ENCODE measurements at regions of chr9 and their contacts with region 1.

Region 1: DNA sequence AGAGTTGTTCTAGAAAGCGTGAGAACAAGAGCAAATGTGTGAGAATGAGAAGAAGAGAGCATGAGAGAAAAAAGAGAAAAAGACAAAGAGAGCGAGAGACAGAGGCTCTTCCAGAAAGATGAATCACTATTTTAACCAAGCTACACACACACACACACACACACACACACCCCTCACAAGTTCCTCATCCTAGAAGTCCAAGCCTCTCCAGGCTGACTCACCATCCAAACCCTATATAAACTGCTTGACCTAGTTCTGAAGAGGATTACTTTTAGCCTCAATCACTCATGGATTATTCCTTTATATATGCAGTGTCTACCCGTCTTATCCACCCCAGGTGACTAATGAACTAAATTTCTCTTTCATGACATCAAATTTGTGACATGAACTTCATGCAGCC is 37.6 kb downstream of the C9orf57 start:
- DNase-seq: no peak
- ATAC-seq: no peak
- H3K4me3 ChIP-seq: no peak overlapping the region
- H3K27ac ChIP-seq: no peak overlapping the region
- H3K4me1 ChIP-seq: no peaks in the 10 kb centered on the region
- H3K27me3 ChIP-seq: no peaks in the 10 kb centered on the region
- CTCF ChIP-seq: no peak
- EP300 ChIP-seq: no peak
- POLR2A ChIP-seq: no peak
- RAD21 ChIP-seq: no peak

Region 2: GRCh38 chr9:71604197-71605063 is 418.4 kb before region 1 on chr9:
- CTCF ChIA-PET with region 1: interaction called, 16 read pairs
- POLR2A ChIA-PET with region 1: no interaction called
- RAD21 ChIA-PET with region 1: interaction called, 4 read pairs
- SMC1A ChIA-PET with region 1: interaction called, 4 read pairs
- in situ Hi-C with region 1: no loop called
- intact Hi-C with region 1: loop called (anchors 2 kb)
- DNase-seq: no peak
- ATAC-seq: peak; percentile 93
- H3K4me3 ChIP-seq: no peak overlapping the region
- H3K27ac ChIP-seq: no peak overlapping the region
- H3K4me1 ChIP-seq: no peaks in the 10 kb centered on the region
- H3K27me3 ChIP-seq: no peaks in the 10 kb centered on the region
- CTCF ChIP-seq: peak; percentile 60 to 74 (median 62)
- EP300 ChIP-seq: no peak
- POLR2A ChIP-seq: no peak
- RAD21 ChIP-seq: peak; percentile 75

Region 3: DNA sequence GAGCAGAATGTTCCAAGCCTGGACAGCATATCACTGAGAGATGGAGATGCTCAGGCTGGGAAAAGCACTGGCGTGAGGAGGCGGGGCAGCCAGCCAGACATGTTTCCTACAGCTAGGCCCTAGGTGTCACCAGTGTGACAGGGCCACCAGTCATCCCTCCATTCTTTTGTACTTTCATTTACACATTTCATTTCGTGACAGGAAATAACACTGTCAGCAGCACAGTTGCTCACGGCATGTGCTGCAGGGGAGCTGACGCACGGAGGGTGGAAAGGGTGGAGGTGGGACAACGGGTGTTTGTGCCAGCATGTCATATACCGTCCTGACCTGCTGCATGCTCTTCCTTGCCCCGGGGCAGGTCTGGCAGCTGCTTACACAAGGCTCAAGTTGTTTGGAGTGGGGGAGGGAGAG is 239.7 kb before region 1 on chr9:
- CTCF ChIA-PET with region 1: interaction called, 11 read pairs
- POLR2A ChIA-PET with region 1: no interaction called
- RAD21 ChIA-PET with region 1: interaction called, 13 read pairs
- SMC1A ChIA-PET with region 1: interaction called, 5 read pairs
- in situ Hi-C with region 1: no loop called
- intact Hi-C with region 1: no loop called
- DNase-seq: no peak
- ATAC-seq: peak; percentile 89
- H3K4me3 ChIP-seq: no peak overlapping the region; the same call in 1 of the 2 replicates
- H3K27ac ChIP-seq: no peak overlapping the region
- H3K4me1 ChIP-seq: peaks cover 23% of the 10 kb centered on the region
- H3K27me3 ChIP-seq: no peaks in the 10 kb centered on the region
- CTCF ChIP-seq: peak in 2 of 3 experiments; percentile 35 to 37; a peak in 3 of 6 replicates
- EP300 ChIP-seq: peak; percentile 79 to 95; a peak in 3 of 4 replicates
- POLR2A ChIP-seq: 0 out of 2 replicates have a peak, but pooled peaks have one; percentile 24
- RAD21 ChIP-seq: peak; percentile 49

Region 4: DNA sequence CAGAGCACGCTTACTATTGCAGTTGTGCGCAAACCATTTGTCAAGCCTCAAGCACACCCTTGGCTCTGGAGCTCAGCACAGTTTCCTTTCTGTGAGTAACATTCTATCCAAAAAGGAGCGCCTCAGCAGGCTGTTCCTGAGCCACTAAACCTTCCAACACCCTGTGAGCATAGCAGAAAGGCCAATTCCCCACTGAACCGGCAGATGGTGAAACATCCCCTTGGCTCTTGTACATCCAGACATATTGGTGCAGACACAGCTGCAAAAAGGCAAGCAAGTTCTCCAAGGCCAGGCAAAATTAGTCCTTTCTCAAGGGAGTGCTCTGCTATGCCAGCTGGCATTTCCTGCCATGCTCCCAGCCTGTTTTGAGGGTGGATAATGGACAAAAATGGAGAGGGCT is 210.5 kb before region 1 on chr9:
- CTCF ChIA-PET with region 1: interaction called, 213 read pairs
- POLR2A ChIA-PET with region 1: no interaction called
- RAD21 ChIA-PET with region 1: interaction called, 85 read pairs
- SMC1A ChIA-PET with region 1: interaction called, 93 read pairs
- in situ Hi-C with region 1: loop called (anchors 5 kb)
- intact Hi-C with region 1: loop called (anchors 1 kb)
- DNase-seq: no peak
- ATAC-seq: no peak
- H3K4me3 ChIP-seq: no peak overlapping the region
- H3K27ac ChIP-seq: no peak overlapping the region
- H3K4me1 ChIP-seq: no peaks in the 10 kb centered on the region
- H3K27me3 ChIP-seq: no peaks in the 10 kb centered on the region
- CTCF ChIP-seq: no peak
- EP300 ChIP-seq: no peak
- POLR2A ChIP-seq: no peak
- RAD21 ChIP-seq: no peak

Region 5: DNA sequence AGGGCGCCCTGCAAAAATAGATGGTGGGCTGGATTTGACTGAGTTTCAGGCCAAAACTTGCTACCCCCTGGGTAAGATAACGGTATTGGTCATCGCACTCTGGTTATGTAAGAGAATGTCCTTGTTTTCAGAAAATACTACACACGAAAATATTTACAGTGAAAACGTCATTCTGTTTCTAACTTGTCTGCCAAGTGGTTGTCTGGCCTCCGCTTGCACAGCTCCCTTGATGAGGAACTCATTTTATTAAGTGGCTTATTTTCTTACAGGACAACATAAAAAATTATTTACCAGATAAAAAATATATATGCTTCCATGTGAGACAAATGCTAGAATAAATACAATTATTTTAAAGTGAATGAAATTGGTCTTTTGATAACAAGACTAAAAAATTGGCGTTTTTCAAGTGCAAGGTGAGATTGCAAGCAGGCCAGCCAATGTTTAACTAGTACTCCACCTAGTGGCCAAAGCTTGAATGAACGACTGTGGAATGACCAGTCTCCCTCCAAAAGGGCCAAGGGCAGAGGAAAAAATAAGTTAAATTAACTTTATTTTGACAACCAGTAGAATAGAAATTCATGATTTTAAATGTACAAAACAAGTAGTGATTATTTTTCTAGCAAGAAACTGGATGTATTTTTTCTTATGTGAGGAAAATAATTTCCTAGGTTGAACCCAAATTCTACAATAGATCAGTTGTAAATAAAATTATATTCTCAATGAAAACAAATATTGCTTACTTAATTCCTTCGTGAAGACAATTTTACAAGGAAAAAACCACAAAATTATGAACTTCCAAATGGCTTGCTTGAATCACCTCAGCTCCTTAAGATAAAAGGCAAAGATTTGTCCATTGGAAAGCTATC is 249.0 kb after region 1 on chr9:
- CTCF ChIA-PET with region 1: interaction called, 17 read pairs
- POLR2A ChIA-PET with region 1: no interaction called
- RAD21 ChIA-PET with region 1: interaction called, 15 read pairs
- SMC1A ChIA-PET with region 1: interaction called, 9 read pairs
- in situ Hi-C with region 1: no loop called
- intact Hi-C with region 1: no loop called
- DNase-seq: no peak
- ATAC-seq: peak; percentile 78
- H3K4me3 ChIP-seq: no peak overlapping the region
- H3K27ac ChIP-seq: no peak overlapping the region
- H3K4me1 ChIP-seq: peaks cover 3% of the 10 kb centered on the region; the same call in 1 of the 2 replicates
- H3K27me3 ChIP-seq: peaks cover 0 to 2% of the 10 kb centered on the region in 2 experiments; a peak in 1 of 4 replicates
- CTCF ChIP-seq: peak; percentile 80 to 82 (median 81)
- EP300 ChIP-seq: no peak
- POLR2A ChIP-seq: no peak
- RAD21 ChIP-seq: peak; percentile 83

Measured in GM12878 (cell line).